ENCODE measurements at regions of chr5 and their contacts with region 1.

Region 1: DNA sequence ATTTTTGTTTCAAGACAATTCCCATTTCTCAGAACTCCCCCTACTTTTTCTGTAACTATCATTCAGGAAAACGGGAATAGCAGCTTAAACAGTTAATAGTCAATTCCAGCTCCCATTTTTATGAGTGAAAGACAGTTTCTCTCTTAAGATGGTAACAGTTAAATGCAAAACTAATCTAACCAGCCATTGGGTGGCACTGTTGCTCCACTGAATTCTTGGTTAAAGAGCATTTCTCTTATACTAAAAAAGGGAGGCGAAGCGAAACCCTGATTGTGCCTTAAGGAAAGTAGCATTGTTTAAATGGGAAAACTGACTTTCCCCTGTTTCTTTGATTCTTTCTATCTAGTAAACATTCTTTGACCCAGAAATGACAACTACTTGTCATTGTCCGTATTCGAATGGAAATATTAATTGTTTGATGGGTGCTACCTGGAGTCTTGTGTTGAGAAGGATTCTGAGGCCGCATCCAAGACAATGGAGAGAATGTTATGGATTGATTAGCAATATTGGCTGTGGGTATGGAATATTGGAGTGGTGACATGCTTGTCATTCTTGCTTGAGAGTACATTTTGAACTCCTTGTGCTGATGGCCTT is 507.8 kb downstream of the MAT2B start:
- ATAC-seq: peak in 5 of 8 experiments; percentile 30 to 79 (median 60)
- H3K4me3 ChIP-seq: no peak overlapping the region
- H3K27ac ChIP-seq: no peak overlapping the region
- H3K4me1 ChIP-seq: peaks cover 7 to 22% of the 10 kb centered on the region in 2 donors

Region 2: GRCh38 chr5:163564321-163564938 is 448.7 kb before region 1 on chr5:
- in situ Hi-C with region 1: loop called in 1 of 9 experiments (anchors 25 kb)
- ATAC-seq: peak; percentile 27 to 67 (median 50)
- H3K4me3 ChIP-seq: no peak overlapping the region
- H3K27ac ChIP-seq: peak overlapping the region in 1 of 2 donors; percentile 6
- H3K4me1 ChIP-seq: peaks cover 22 to 38% of the 10 kb centered on the region in 2 donors

Region 3: GRCh38 chr5:164475339-164475977 is 462.3 kb after region 1 on chr5:
- in situ Hi-C with region 1: loop called in 1 of 9 experiments (anchors 25 kb)
- ATAC-seq: peak in 1 of 8 experiments; percentile 26
- H3K4me3 ChIP-seq: no peak overlapping the region
- H3K27ac ChIP-seq: no peak overlapping the region
- H3K4me1 ChIP-seq: peaks cover 0 to 5% of the 10 kb centered on the region in 2 donors